Cardiac septum (tissue), 1 donor: ENCODE measurements at regions of chr19 and their contacts with region 1.

Region 1: GRCh38 chr19:40444192-40445028 is at the start of gene SERTAD3:
- DNase-seq: peak; percentile 98
- total RNA-seq, gene SERTAD3: 33.9 TPM

Region 2: GRCh38 chr19:40341601-40342482 is 102.6 kb before region 1 on chr19:
- intact Hi-C with region 1: loop called (anchors 5 kb)
- DNase-seq: peak; percentile 86

Region 3: DNA sequence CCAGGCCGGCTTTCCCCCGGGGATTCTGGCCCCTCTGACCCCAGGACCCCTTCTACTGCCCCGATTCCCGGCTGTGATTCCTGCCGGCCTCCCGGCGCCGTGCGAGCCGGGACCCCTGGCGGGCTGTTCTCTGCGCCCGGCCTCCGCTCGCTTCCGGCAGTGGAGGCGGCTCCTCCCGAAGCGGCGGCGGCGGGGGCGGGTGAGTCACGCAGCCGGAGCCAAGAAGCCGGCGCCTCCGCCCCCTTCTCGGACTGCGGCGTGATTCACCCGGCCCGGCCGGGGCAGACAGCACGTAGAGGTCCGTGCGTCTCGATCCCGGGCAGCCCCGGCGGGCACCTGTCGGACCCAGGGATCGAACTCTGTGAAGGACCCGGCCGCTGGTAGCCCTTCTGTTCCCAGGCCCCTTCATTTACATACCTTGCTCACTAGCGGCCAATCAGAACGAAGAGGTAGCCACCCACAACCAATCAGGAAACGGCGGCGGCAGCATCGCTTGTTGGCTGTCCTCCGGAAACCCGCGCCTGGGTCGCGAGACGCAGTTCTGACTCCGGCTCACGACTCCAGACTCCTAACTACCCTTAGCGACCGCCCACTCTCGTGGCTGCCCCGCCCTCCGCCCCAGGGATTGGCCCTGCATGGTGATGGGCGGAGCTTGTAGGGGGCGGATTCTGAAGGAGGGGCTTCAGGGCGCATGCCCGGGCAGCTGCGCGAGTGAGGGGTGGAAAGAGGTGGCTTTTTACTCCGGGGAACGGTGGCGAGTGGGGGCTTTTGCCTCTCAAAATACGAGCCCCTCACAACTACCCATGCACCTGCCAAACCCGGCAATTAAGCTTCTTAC is 18.7 kb before region 1 on chr19 and contains the start of gene SERTAD1:
- intact Hi-C with region 1: loop called (anchors 1 kb)
- DNase-seq: peak; percentile 100
- total RNA-seq, gene SERTAD1: 16.7 TPM